PC-3 (cell line): ENCODE measurements at regions of chr10 and their contacts with region 1.

Region 1: DNA sequence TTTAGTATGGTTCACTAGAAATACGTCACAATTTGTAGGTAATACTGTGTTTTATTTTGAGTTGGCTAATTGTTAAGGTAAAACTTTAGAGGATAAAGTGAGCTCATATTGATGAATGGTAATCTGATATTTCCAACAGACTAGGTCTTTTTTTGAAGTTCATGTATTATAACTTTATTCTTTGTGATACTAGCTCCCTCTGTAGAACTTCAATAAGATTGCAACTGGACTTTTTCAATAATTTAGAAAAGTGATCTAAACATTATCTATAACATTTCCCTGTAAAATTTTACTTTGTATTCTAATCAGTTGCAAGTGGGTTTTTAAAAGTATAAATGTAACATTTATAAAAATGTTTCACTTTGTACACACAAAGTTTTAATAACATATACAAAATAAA is 83.5 kb downstream of the ADK start:
- DNase-seq: peak; percentile 81
- ATAC-seq: peak; percentile 25; the same call in 1 of the 2 replicates
- H3K4me3 ChIP-seq: no peak overlapping the region
- H3K27ac ChIP-seq: no peak overlapping the region
- H3K4me1 ChIP-seq: peaks cover 14% of the 10 kb centered on the region
- H3K27me3 ChIP-seq: no peaks in the 10 kb centered on the region
- CTCF ChIP-seq: peak; percentile 99

Region 2: DNA sequence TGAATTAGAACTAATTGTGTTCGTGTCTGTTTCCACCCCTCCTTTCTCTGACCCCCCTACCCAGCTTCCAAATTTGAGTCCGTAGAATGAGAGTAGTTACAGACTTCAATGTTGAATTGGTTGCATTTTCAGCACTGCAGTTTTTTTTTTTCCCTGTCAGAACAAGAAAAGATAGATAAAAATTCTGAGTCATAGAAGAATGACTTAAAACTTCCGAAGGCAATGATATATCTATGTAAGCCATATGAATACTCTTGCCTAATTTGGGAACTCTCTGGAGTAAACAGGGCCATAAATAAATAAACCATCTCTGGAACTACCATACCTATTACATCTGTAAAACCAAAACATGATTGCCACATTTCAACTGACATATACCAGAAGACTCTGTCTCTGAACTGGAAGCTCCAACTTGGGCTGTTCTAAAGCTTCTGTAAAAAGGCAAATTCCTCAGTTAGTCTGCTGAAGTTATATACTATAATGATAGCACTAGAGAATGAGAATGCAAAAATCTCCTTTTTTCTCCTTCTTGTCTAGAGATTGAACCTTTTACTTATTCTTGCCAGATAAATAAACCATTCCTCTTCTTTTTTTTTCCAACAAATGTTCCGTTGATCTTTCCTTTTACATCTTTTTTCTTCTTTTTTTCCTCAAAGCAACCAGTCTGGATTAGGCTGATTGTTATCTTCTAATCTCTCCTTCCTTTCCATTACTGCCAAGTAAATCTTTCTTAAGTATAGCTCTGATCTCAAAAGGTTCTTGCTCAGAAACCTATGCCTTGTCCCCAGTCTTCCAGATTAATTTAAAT is 213.1 kb before region 1 on chr10:
- CTCF ChIA-PET with region 1: no interaction called
- POLR2A ChIA-PET with region 1: no interaction called
- intact Hi-C with region 1: loop called (anchors 5 kb)
- DNase-seq: peak; percentile 89
- ATAC-seq: peak; percentile 53
- H3K4me3 ChIP-seq: no peak overlapping the region
- H3K27ac ChIP-seq: peak overlapping the region; percentile 14
- H3K4me1 ChIP-seq: peaks cover 37% of the 10 kb centered on the region
- H3K27me3 ChIP-seq: no peaks in the 10 kb centered on the region
- CTCF ChIP-seq: no peak

Region 3: DNA sequence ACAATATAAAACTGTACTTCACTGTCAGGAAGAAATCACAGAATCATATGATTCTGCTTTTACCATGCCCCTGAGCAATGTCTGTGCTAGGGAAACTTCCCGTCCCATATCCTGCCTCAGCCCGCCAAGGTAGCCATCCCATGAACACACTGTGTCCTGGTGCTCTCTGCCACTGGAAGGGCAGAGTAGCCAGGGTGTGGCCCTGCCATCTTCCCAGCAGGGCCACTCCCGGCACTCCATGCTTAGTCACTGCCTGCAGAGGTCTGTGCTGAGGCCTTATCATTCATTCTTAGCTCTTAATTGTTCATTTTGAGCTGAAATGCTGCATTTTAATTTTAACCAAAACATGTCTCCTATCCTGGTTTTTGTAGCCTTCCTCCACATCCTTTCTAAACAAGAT is 115.8 kb before region 1 on chr10:
- CTCF ChIA-PET with region 1: interaction called, 5 read pairs
- POLR2A ChIA-PET with region 1: no interaction called
- intact Hi-C with region 1: loop called (anchors 2 kb)
- DNase-seq: peak; percentile 93
- ATAC-seq: peak; percentile 98
- H3K4me3 ChIP-seq: no peak overlapping the region
- H3K27ac ChIP-seq: peak overlapping the region; percentile 59
- H3K4me1 ChIP-seq: peaks cover 20% of the 10 kb centered on the region
- H3K27me3 ChIP-seq: no peaks in the 10 kb centered on the region
- CTCF ChIP-seq: 0 out of 2 replicates have a peak, but pooled peaks have one; percentile 16

Region 4: GRCh38 chr10:74151056-74151878 is 83.3 kb before region 1 on chr10 and contains the start of gene ADK:
- CTCF ChIA-PET with region 1: interaction called, 16 read pairs
- POLR2A ChIA-PET with region 1: interaction called, 16 read pairs
- intact Hi-C with region 1: loop called (anchors 1 kb)
- DNase-seq: peak; percentile 100
- ATAC-seq: peak; percentile 89
- H3K4me3 ChIP-seq: peak within 1 kb of the TSS; percentile 69
- H3K27ac ChIP-seq: peak within 1 kb of the TSS; percentile 54
- H3K4me1 ChIP-seq: peaks cover 28% of the 10 kb centered on the region
- H3K27me3 ChIP-seq: no peaks in the 10 kb centered on the region
- CTCF ChIP-seq: peak; percentile 76
- total RNA-seq, gene ADK: 221 and 256 TPM in 2 replicates

Region 5: GRCh38 chr10:74529205-74529604 is 294.6 kb after region 1 on chr10:
- CTCF ChIA-PET with region 1: no interaction called
- POLR2A ChIA-PET with region 1: no interaction called
- intact Hi-C with region 1: no loop called
- DNase-seq: no peak
- ATAC-seq: no peak
- H3K4me3 ChIP-seq: no peak overlapping the region
- H3K27ac ChIP-seq: no peak overlapping the region
- H3K4me1 ChIP-seq: no peaks in the 10 kb centered on the region
- H3K27me3 ChIP-seq: no peaks in the 10 kb centered on the region
- CTCF ChIP-seq: no peak